Mammary epithelial cell (primary cell): ENCODE measurements at regions of chr19 and their contacts with region 1.

Region 1: GRCh38 chr19:40305403-40305802 is 20.3 kb upstream of the AKT2 start:
- DNase-seq: peak; percentile 63
- H3K4me3 ChIP-seq: no peak overlapping the region
- H3K27ac ChIP-seq: no peak overlapping the region
- H3K4me1 ChIP-seq: peaks cover 19% of the 10 kb centered on the region
- H3K27me3 ChIP-seq: no peaks in the 10 kb centered on the region
- CTCF ChIP-seq: peak; percentile 72 to 78

Region 2: DNA sequence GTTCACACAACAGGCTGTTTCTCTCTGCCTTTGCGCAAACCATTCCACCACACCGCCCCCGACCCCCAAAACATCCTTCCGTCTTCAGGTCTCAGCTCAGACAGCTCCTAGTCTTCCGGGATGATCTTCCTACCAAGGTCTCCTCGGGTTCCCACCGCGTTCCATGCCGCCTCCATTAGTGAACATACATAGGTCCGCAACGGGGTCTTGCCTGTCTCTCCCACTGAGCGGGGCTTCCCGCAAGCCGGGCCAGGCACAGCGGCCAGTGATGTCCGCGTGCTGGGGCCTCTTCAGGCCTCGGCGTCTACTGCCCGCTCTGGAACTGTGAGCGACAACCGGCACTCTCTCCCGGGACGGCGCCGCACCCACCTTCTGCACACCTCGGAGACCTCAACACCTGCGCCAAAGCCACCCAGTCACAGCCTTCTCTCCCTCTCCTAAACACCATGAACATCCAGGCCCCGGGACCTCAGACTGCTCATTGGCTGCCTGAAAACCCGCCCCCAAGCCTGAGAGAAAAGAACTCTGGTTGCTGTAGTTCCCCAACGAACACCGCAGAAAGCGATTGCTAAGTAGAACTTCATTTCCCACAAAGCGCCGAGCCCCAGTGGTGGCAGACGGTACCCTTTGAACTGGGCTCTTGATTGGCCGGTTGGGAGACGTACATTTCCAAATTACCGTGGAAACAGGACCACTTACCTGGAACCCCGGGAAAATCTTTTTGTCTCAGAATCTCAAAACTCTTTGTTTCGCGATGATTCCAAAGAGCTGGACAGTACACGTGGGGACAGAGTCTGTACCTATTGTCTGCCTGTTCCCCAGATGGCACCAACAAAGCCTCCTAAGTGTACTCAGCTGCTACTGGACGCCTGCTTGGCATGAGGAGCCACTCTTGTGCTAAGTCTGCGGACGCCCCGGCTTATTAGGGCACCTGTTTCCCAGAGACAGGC is 481.0 kb before region 1 on chr19:
- CTCF ChIA-PET with region 1: no interaction called
- dilution Hi-C with region 1: no loop called
- in situ Hi-C with region 1: no loop called
- intact Hi-C with region 1: no loop called
- DNase-seq: peak; percentile 84
- H3K4me3 ChIP-seq: peak overlapping the region; percentile 63 to 80 (median 70)
- H3K27ac ChIP-seq: no peak overlapping the region
- H3K4me1 ChIP-seq: peaks cover 9% of the 10 kb centered on the region
- H3K27me3 ChIP-seq: no peaks in the 10 kb centered on the region
- CTCF ChIP-seq: no peak

Region 3: GRCh38 chr19:40139533-40140287 is 165.7 kb before region 1 on chr19:
- CTCF ChIA-PET with region 1: no interaction called
- dilution Hi-C with region 1: no loop called
- in situ Hi-C with region 1: no loop called
- intact Hi-C with region 1: loop called (anchors 1 kb)
- DNase-seq: peak; percentile 23
- H3K4me3 ChIP-seq: no peak overlapping the region
- H3K27ac ChIP-seq: no peak overlapping the region
- H3K4me1 ChIP-seq: no peaks in the 10 kb centered on the region
- H3K27me3 ChIP-seq: no peaks in the 10 kb centered on the region
- CTCF ChIP-seq: peak; percentile 59 to 75

Region 4: DNA sequence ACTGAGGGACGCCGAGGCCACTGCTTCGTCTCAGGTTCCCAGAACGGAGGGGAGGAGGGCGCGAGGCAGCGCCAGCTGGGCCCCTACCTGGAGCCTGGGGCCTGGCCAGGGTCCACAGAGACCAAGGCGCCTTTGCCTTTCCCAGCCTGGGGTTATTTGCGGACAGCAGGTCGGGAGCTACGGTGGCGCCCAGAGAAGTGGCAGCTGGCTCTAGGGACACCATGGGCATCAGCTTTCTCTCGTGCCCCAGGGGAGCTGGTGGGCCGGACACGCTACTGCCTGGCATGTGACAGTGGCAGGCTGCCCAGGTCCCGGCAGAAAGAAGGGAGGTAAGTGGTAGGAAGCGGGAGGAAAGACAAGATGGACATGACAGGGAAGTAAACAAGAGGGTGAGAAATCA is 39.3 kb before region 1 on chr19:
- CTCF ChIA-PET with region 1: no interaction called
- dilution Hi-C with region 1: no loop called
- in situ Hi-C with region 1: no loop called
- intact Hi-C with region 1: no loop called
- DNase-seq: no peak
- H3K4me3 ChIP-seq: no peak overlapping the region
- H3K27ac ChIP-seq: no peak overlapping the region
- H3K4me1 ChIP-seq: no peaks in the 10 kb centered on the region
- H3K27me3 ChIP-seq: no peaks in the 10 kb centered on the region
- CTCF ChIP-seq: no peak

Region 5: GRCh38 chr19:40341601-40342482 is 36.4 kb after region 1 on chr19:
- CTCF ChIA-PET with region 1: no interaction called
- dilution Hi-C with region 1: no loop called
- in situ Hi-C with region 1: no loop called
- intact Hi-C with region 1: no loop called
- DNase-seq: no peak
- H3K4me3 ChIP-seq: no peak overlapping the region
- H3K27ac ChIP-seq: no peak overlapping the region
- H3K4me1 ChIP-seq: peaks cover 8% of the 10 kb centered on the region
- H3K27me3 ChIP-seq: no peaks in the 10 kb centered on the region
- CTCF ChIP-seq: no peak

Region 6: DNA sequence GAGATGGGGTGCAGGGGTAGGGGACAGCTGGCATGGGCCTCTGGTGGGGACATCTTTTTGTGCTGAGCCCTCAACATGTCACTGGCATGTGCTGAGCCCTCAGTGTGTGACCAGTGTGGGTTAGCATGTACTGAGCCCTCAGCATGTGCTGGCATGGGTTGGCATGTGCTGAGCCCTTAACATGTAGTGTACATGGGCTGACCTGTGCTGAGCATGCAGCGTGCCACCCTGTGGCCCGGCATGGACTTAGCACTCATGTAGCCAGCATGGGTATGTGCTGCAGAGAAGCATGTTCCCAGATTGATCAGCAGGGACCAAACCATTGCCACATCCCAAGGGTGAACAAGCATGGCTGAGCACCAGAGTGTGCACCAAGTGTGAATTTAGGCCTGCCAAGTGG is 73.1 kb after region 1 on chr19:
- CTCF ChIA-PET with region 1: no interaction called
- dilution Hi-C with region 1: no loop called
- in situ Hi-C with region 1: no loop called
- intact Hi-C with region 1: loop called (anchors 1 kb)
- DNase-seq: no peak
- H3K4me3 ChIP-seq: no peak overlapping the region
- H3K27ac ChIP-seq: no peak overlapping the region
- H3K4me1 ChIP-seq: no peaks in the 10 kb centered on the region
- H3K27me3 ChIP-seq: no peaks in the 10 kb centered on the region
- CTCF ChIP-seq: no peak

Region 7: GRCh38 chr19:40444192-40445028 is 139.0 kb after region 1 on chr19 and contains the start of gene SERTAD3:
- CTCF ChIA-PET with region 1: no interaction called
- dilution Hi-C with region 1: no loop called
- in situ Hi-C with region 1: no loop called
- intact Hi-C with region 1: loop called (anchors 5 kb)
- DNase-seq: peak; percentile 94
- H3K4me3 ChIP-seq: peak within 1 kb of the TSS; percentile 92 to 100 (median 95)
- H3K27ac ChIP-seq: peak within 1 kb of the TSS; percentile 95
- H3K4me1 ChIP-seq: peaks cover 35% of the 10 kb centered on the region
- H3K27me3 ChIP-seq: no peaks in the 10 kb centered on the region
- CTCF ChIP-seq: peak in 1 of 2 donors; percentile 7
- total RNA-seq, gene SERTAD3: 34.3 to 35.8 TPM

Region 8: GRCh38 chr19:40553885-40554857 is 248.8 kb after region 1 on chr19:
- CTCF ChIA-PET with region 1: no interaction called
- dilution Hi-C with region 1: loop called (anchors 5 kb)
- in situ Hi-C with region 1: no loop called
- intact Hi-C with region 1: no loop called
- DNase-seq: peak; percentile 12
- H3K4me3 ChIP-seq: no peak overlapping the region
- H3K27ac ChIP-seq: no peak overlapping the region
- H3K4me1 ChIP-seq: no peaks in the 10 kb centered on the region
- H3K27me3 ChIP-seq: peaks cover 2% of the 10 kb centered on the region
- CTCF ChIP-seq: no peak

Region 9: GRCh38 chr19:40603389-40604135 is 298.2 kb after region 1 on chr19:
- CTCF ChIA-PET with region 1: interaction called, 15 read pairs
- dilution Hi-C with region 1: no loop called
- in situ Hi-C with region 1: loop called in 1 of 2 experiments (anchors 25 kb)
- intact Hi-C with region 1: loop called (anchors 1 kb)
- DNase-seq: peak; percentile 97
- H3K4me3 ChIP-seq: peak overlapping the region; percentile 32 to 50 (median 37)
- H3K27ac ChIP-seq: peak overlapping the region; percentile 39
- H3K4me1 ChIP-seq: peaks cover 50% of the 10 kb centered on the region
- H3K27me3 ChIP-seq: no peaks in the 10 kb centered on the region
- CTCF ChIP-seq: peak in 1 of 2 donors; percentile 32

Region 10: GRCh38 chr19:40633207-40633606 is 327.8 kb after region 1 on chr19:
- CTCF ChIA-PET with region 1: no interaction called
- dilution Hi-C with region 1: no loop called
- in situ Hi-C with region 1: no loop called
- intact Hi-C with region 1: loop called (anchors 1 kb)
- DNase-seq: no peak
- H3K4me3 ChIP-seq: no peak overlapping the region
- H3K27ac ChIP-seq: no peak overlapping the region
- H3K4me1 ChIP-seq: no peaks in the 10 kb centered on the region
- H3K27me3 ChIP-seq: no peaks in the 10 kb centered on the region
- CTCF ChIP-seq: no peak